ENCODE measurements at regions of chr10 and their contacts with region 1.

Region 1: GRCh38 chr10:101012525-101013364 is 13.1 kb downstream of the LZTS2 start:
- DNase-seq: peak; percentile 79
- H3K4me3 Mint-ChIP-seq: no peak overlapping the region
- H3K27ac Mint-ChIP-seq: no peak overlapping the region
- H3K4me1 Mint-ChIP-seq: peaks cover 20% of the 10 kb centered on the region
- H3K27me3 Mint-ChIP-seq: peaks cover 29% of the 10 kb centered on the region

Region 2: DNA sequence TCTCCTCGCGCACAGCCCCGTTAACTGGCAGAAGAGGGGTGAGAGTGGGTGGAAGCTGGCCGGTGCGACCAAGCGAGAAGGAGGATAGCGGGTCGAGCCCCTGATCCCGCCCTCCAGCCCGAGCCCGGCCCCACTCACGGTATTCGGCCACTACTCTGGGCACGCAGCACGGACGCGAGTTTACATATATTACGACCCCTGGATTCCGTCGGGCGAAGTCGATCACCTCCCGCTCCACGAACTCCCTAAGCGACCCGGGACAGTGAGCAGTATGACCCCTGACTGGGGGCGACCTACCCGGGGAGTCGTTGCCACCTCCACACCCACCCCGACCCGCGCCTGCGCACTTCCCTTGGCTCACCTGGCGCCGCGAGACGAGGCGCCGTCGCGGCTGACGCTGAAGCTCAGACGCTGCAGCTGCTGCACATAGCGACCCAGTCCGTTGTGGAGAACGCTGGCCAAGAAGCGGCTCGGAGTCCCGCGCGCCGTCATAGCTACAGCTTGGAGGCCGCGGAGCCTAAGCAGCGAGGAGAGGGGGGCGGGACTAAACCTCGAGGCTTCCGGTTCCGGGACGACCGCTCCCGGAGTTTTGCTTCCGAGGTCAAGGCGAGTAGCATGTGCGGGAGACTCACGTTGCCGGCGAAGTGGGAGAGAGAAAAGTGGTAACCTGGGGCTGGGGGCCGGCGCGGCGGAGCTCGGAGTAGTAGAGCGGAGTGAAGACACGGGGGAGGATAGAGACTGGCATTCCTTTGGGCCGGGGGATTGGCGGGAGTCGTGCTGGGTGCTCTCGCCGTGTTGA is 25.6 kb before region 1 on chr10 and contains the starts of genes MRPL43 and TWNK:
- CTCF ChIA-PET with region 1: interaction called, 186 read pairs
- POLR2A ChIA-PET with region 1: interaction called, 4 read pairs
- DNase-seq: peak; percentile 87
- H3K4me3 Mint-ChIP-seq: peak within 1 kb of the TSS; percentile 85
- H3K27ac Mint-ChIP-seq: peak within 1 kb of the TSS; percentile 81
- H3K4me1 Mint-ChIP-seq: peaks cover 33% of the 10 kb centered on the region
- H3K27me3 Mint-ChIP-seq: no peaks in the 10 kb centered on the region
- total RNA-seq, gene MRPL43: 47.8 to 49.3 TPM
- total RNA-seq, gene TWNK: 6.4 to 7.1 TPM

Region 3: DNA sequence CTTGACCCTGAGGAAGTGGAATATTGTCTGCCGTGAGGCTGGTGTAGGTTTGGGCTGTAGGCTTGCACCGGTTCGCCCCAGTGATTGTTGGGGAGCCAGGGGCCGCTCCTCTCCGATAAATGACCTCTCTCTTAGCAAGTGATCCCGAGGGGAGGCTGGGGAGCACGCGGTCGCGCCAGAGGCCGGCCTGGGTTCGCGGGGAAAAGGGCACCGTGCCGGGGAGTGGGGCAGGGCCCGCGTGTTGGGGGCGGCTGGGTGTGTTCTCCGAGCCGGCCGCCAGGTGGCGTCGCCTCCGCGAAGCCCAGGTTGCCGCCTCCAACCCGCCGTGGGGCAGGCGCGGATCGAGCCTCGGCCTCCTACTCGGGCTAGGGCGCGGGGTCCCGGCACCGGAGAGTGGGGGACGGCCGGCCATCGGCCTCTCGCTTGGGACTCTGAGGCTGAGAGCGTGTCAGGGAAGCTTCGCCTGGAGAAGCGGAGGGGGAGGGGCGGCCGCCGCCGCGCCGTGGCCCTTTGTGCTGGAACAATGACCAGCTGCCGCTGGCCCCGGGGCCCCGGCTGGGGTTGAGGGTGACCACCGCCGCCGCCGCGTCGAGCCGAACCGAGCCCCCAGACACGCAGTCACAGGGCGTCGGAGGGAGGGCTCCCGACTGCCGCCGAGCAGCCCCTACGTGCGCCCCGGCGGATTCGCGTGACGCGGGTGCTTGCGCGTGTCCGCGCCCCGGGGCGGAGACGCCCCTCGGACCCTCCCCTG is 13.6 kb before region 1 on chr10:
- CTCF ChIA-PET with region 1: interaction called, 186 read pairs
- POLR2A ChIA-PET with region 1: interaction called, 17 read pairs
- DNase-seq: peak; percentile 78
- H3K4me3 Mint-ChIP-seq: peak overlapping the region; percentile 77
- H3K27ac Mint-ChIP-seq: peak overlapping the region; percentile 66
- H3K4me1 Mint-ChIP-seq: peaks cover 28% of the 10 kb centered on the region
- H3K27me3 Mint-ChIP-seq: peaks cover 3% of the 10 kb centered on the region

Region 4: GRCh38 chr10:101031128-101031795 is 18.5 kb after region 1 on chr10 and contains the starts of genes PDZD7 and SFXN3:
- CTCF ChIA-PET with region 1: interaction called, 120 read pairs
- POLR2A ChIA-PET with region 1: interaction called, 25 read pairs
- DNase-seq: peak; percentile 97
- H3K4me3 Mint-ChIP-seq: peak within 1 kb of the TSS; percentile 91
- H3K27ac Mint-ChIP-seq: peak within 1 kb of the TSS; percentile 96
- H3K4me1 Mint-ChIP-seq: peaks cover 27% of the 10 kb centered on the region
- H3K27me3 Mint-ChIP-seq: peaks cover 14% of the 10 kb centered on the region
- total RNA-seq, gene PDZD7: 1.1 to 1.9 TPM
- total RNA-seq, gene SFXN3: 91.4 to 95.0 TPM

Region 5: GRCh38 chr10:101050208-101051069 is 37.7 kb after region 1 on chr10:
- CTCF ChIA-PET with region 1: interaction called, 23 read pairs
- POLR2A ChIA-PET with region 1: no interaction called
- DNase-seq: peak; percentile 83
- H3K4me3 Mint-ChIP-seq: no peak overlapping the region
- H3K27ac Mint-ChIP-seq: no peak overlapping the region
- H3K4me1 Mint-ChIP-seq: peaks cover 32% of the 10 kb centered on the region
- H3K27me3 Mint-ChIP-seq: peaks cover 41% of the 10 kb centered on the region

Measured in activated CD4-positive, alpha-beta memory T cell treated with anti-CD3 and anti-CD28 coated beads, Interleukin-2, amount 10 ng/mL, durations not matched to agents 7 days and 5 days (primary cell).